Natural killer cell (primary cell): ENCODE measurements at regions of chrX and their contacts with region 1.

Region 1: GRCh38 chrX:130268500-130269170 is at the start of gene ZNF280C:
- DNase-seq: peak; percentile 80 to 93
- ATAC-seq: peak; percentile 92 to 98 (median 93)
- H3K4me3 ChIP-seq: peak within 1 kb of the TSS; percentile 47
- H3K4me3 Mint-ChIP-seq: peak within 1 kb of the TSS; percentile 88
- H3K27ac ChIP-seq: peak within 1 kb of the TSS; percentile 44
- H3K27ac Mint-ChIP-seq: peak within 1 kb of the TSS; percentile 77 to 90
- H3K4me1 ChIP-seq: no peaks in the 10 kb centered on the region
- H3K4me1 Mint-ChIP-seq: peaks cover 3 to 10% of the 10 kb centered on the region in 2 donors
- H3K27me3 ChIP-seq: no peaks in the 10 kb centered on the region
- H3K27me3 Mint-ChIP-seq: peaks cover 0 to 5% of the 10 kb centered on the region in 2 donors
- CTCF ChIP-seq: no peak
- total RNA-seq, gene ZNF280C: 5.5 to 6.0 (median 5.8) TPM

Region 2: GRCh38 chrX:130339408-130340222 is 71.0 kb after region 1 on chrX and contains the start of gene SLC25A14:
- intact Hi-C with region 1: loop called (anchors 1 kb)
- DNase-seq: peak; percentile 59 to 86
- ATAC-seq: peak; percentile 85 to 93 (median 93)
- H3K4me3 ChIP-seq: peak within 1 kb of the TSS; percentile 63
- H3K4me3 Mint-ChIP-seq: peak within 1 kb of the TSS; percentile 93
- H3K27ac ChIP-seq: peak within 1 kb of the TSS; percentile 35
- H3K27ac Mint-ChIP-seq: peak within 1 kb of the TSS; percentile 85 to 92
- H3K4me1 ChIP-seq: peaks cover 7% of the 10 kb centered on the region
- H3K4me1 Mint-ChIP-seq: peaks cover 8 to 23% of the 10 kb centered on the region in 2 donors
- H3K27me3 ChIP-seq: no peaks in the 10 kb centered on the region
- H3K27me3 Mint-ChIP-seq: peaks cover 0 to 3% of the 10 kb centered on the region in 2 donors
- CTCF ChIP-seq: no peak
- total RNA-seq, gene SLC25A14: 17.6 to 20.5 (median 19.0) TPM